ENCODE measurements at regions of chr7 and their contacts with region 1.

Region 1: DNA sequence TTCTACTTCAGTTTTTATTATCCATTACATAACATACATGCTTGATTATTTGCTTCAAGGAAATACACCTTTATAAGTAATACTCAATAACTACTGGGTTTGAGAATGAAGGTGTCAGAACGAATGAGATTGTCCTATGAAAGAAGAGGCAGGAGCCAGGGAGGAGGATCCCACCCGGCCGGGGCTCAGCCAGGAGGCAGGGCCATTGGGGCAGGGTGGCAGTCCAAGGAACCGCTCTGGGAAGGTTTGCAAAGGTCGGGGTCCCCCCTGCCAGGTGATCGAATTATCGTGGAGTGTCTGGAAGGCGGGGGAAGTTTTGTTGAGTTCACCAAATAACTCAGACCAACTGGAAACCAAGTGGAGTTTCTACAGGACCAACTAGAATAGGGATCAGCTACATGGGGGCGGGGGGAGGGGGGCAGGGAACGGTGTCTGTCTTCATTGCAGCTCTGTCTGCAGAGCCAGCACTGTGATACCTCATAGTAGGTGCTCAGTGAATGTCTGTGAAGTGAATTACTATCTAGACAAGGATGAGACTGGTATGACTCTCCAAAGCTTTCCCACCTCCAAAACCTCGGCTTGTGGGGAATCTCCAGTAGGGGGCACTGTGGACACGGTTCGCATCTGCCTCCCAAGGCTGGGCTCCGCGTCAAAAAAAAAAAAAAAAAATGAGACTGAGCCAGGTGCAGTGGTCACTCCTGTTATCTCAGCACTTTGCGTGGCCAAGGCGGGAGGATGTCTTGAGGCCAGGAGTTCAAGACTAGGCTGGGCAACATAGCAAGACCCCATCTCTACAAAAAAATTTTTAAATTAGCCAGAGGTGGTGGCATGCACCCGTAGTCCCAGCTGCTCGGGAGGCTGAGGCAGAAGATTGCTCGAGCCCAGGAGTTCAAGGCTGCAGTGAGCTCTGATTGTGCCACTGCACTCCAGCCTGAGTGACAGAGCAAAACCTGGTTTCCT is 9.4 kb downstream of the TRIM56 start:
- DNase-seq: peak; percentile 80
- H3K4me3 ChIP-seq: peak overlapping the region in 1 of 2 experiments; percentile 9; a peak in 1 of 4 replicates
- H3K27ac ChIP-seq: peak overlapping the region; percentile 18 to 93; a peak in 3 of 4 replicates
- H3K4me1 ChIP-seq: peaks cover 2 to 24% of the 10 kb centered on the region in 2 experiments; a peak in 3 of 4 replicates
- H3K27me3 ChIP-seq: no peaks in the 10 kb centered on the region
- CTCF ChIP-seq: peak; percentile 99
- EP300 ChIP-seq: no peak
- RAD21 ChIP-seq: peak; percentile 76

Region 2: DNA sequence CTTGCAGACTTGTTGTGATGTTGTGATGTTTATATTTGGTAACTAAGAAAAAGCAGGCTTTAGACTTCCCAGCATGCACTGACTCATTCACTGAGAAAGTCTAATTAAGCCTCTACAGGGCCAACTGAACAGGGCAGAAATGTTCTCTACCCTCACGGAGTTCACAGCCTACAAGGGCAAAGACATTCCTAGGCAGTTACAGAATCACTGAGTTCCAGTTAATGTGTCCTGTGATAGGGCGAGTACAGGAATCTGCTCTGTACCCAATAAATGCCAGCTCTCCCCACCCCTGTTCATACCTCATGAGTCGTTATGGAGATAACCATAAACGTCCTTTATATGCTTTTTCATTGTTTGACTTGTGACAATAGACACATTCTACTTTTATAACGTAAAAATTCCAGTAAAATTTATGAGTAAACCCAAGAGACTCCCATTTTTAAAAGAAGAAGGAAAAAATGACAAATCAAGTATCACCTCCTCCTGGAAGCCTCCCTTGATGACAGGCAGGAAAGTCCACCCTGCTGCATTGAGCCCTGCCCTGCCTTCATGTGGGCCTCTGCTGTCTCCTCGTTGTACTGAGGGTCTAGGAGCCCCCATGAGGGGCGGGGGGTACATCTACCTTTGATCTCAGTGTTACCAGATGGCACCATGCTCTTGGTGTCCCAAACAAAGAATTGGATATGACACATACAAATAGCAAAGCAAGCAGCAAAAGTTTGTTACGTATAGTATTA is 111.1 kb before region 1 on chr7:
- CTCF ChIA-PET with region 1: no interaction called
- POLR2A ChIA-PET with region 1: no interaction called
- DNase-seq: no peak
- H3K4me3 ChIP-seq: no peak overlapping the region
- H3K27ac ChIP-seq: no peak overlapping the region
- H3K4me1 ChIP-seq: no peaks in the 10 kb centered on the region
- H3K27me3 ChIP-seq: peaks cover 54% of the 10 kb centered on the region; the same call in 1 of the 2 replicates
- CTCF ChIP-seq: no peak
- EP300 ChIP-seq: no peak
- RAD21 ChIP-seq: no peak

Region 3: GRCh38 chr7:101108330-101108857 is 13.7 kb after region 1 on chr7:
- CTCF ChIA-PET with region 1: interaction called, 43 read pairs
- POLR2A ChIA-PET with region 1: no interaction called
- DNase-seq: no peak
- H3K4me3 ChIP-seq: no peak overlapping the region
- H3K27ac ChIP-seq: peak overlapping the region in 1 of 2 experiments; percentile 47; a peak in 2 of 4 replicates
- H3K4me1 ChIP-seq: peaks cover 6 to 26% of the 10 kb centered on the region in 2 experiments; a peak in 3 of 4 replicates
- H3K27me3 ChIP-seq: no peaks in the 10 kb centered on the region
- CTCF ChIP-seq: no peak
- EP300 ChIP-seq: no peak
- RAD21 ChIP-seq: no peak

Region 4: DNA sequence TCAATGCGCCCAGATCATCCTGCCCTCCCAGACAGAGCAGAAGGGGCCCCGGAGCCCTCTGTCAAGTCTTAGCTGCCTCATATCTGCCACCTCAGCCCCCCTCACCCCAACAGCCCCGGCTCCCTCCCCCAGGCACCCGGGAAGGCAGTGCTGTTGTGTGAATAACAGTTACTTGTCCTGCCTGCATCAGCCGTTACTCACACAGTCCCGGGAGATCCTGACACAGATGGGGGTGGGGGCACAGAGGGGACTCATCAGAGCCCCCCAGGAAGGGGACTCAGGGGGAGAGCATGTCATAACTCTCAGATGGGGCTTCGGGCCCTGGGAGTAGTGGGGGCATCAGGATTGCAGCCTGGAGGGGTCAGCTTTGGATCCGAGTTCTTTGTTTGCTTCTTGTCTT is 19.8 kb after region 1 on chr7:
- CTCF ChIA-PET with region 1: interaction called, 43 read pairs
- POLR2A ChIA-PET with region 1: no interaction called
- DNase-seq: no peak
- H3K4me3 ChIP-seq: no peak overlapping the region
- H3K27ac ChIP-seq: peak overlapping the region in 1 of 2 experiments; percentile 98; a peak in 2 of 4 replicates
- H3K4me1 ChIP-seq: peaks cover 7 to 38% of the 10 kb centered on the region in 2 experiments; a peak in 3 of 4 replicates
- H3K27me3 ChIP-seq: no peaks in the 10 kb centered on the region
- CTCF ChIP-seq: no peak
- EP300 ChIP-seq: peak in 1 of 2 experiments; percentile 79; a peak in 1 of 4 replicates
- RAD21 ChIP-seq: no peak

Region 5: DNA sequence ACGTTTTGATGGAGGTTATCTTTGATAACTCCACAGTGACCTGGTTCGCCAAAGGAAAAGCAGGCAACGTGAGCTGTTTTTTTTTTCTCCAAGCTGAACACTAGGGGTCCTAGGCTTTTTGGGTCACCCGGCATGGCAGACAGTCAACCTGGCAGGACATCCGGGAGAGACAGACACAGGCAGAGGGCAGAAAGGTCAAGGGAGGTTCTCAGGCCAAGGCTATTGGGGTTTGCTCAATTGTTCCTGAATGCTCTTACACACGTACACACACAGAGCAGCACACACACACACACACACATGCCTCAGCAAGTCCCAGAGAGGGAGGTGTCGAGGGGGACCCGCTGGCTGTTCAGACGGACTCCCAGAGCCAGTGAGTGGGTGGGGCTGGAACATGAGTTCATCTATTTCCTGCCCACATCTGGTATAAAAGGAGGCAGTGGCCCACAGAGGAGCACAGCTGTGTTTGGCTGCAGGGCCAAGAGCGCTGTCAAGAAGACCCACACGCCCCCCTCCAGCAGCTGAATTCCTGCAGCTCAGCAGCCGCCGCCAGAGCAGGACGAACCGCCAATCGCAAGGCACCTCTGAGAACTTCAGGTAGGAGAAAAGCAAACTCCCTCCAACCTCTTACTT is 32.1 kb after region 1 on chr7 and contains the start of gene SERPINE1:
- CTCF ChIA-PET with region 1: interaction called, 38 read pairs
- POLR2A ChIA-PET with region 1: no interaction called
- DNase-seq: peak; percentile 83
- H3K4me3 ChIP-seq: peak within 1 kb of the TSS; percentile 46 to 85; a peak in 3 of 4 replicates
- H3K27ac ChIP-seq: peak within 1 kb of the TSS; percentile 61 to 98
- H3K4me1 ChIP-seq: peaks cover 14 to 39% of the 10 kb centered on the region in 2 experiments; a peak in 3 of 4 replicates
- H3K27me3 ChIP-seq: no peaks in the 10 kb centered on the region
- CTCF ChIP-seq: peak; percentile 60
- EP300 ChIP-seq: peak in 1 of 2 experiments; percentile 55; a peak in 1 of 4 replicates
- RAD21 ChIP-seq: no peak; the same call in 1 of the 2 replicates
- polyA plus RNA-seq, gene SERPINE1: 4,174 and 5,753 TPM in 2 replicates